Lower leg skin (tissue), 4 donors: ENCODE measurements at regions of chr6 and their contacts with region 1.

Region 1: GRCh38 chr6:168526841-168527281 is 85.9 kb downstream of the SMOC2 start:
- DNase-seq: peak in 1 of 2 donors; percentile 83
- H3K4me3 ChIP-seq: no peak overlapping the region
- CTCF ChIP-seq: no peak
- POLR2A ChIP-seq: no peak

Region 2: GRCh38 chr6:168206186-168206585 is 320.7 kb before region 1 on chr6:
- intact Hi-C with region 1: no loop called
- DNase-seq: no peak
- H3K4me3 ChIP-seq: no peak overlapping the region
- CTCF ChIP-seq: no peak
- POLR2A ChIP-seq: no peak

Region 3: GRCh38 chr6:168292826-168293225 is 234.0 kb before region 1 on chr6:
- intact Hi-C with region 1: no loop called
- DNase-seq: peak in 1 of 2 donors; percentile 69
- H3K4me3 ChIP-seq: no peak overlapping the region
- CTCF ChIP-seq: no peak
- POLR2A ChIP-seq: no peak

Region 4: GRCh38 chr6:168542301-168542700 is 15.4 kb after region 1 on chr6:
- intact Hi-C with region 1: loop called (anchors 1 kb)
- DNase-seq: peak in 1 of 2 donors; percentile 78
- H3K4me3 ChIP-seq: no peak overlapping the region
- CTCF ChIP-seq: no peak
- POLR2A ChIP-seq: no peak

Region 5: GRCh38 chr6:169409742-169410312 is 883.0 kb after region 1 on chr6:
- intact Hi-C with region 1: no loop called
- DNase-seq: no peak
- H3K4me3 ChIP-seq: no peak overlapping the region
- CTCF ChIP-seq: no peak
- POLR2A ChIP-seq: no peak